H1 (cell line): ENCODE measurements at regions of chr12 and their contacts with region 1.

Region 1: GRCh38 chr12:4857472-4858291 is 52.0 kb upstream of the KCNA1 start:
- DNase-seq: peak; percentile 50 to 92
- H3K4me3 ChIP-seq: peak overlapping the region in 2 of 4 experiments; percentile 34 to 45; a peak in 5 of 8 replicates
- H3K27ac ChIP-seq: no peak overlapping the region
- H3K4me1 ChIP-seq: peaks cover 2 to 14% (median 6%) of the 10 kb centered on the region in 4 experiments; a peak in 6 of 7 replicates
- H3K27me3 ChIP-seq: peaks cover 0 to 13% (median 6%) of the 10 kb centered on the region in 4 experiments; a peak in 4 of 7 replicates
- CTCF ChIP-seq: peak; percentile 76 to 94 (median 91)
- EP300 ChIP-seq: 0 out of 3 replicates have a peak, but pooled peaks of 1 of the 2 experiments have one; percentile 17
- POLR2A ChIP-seq: no peak
- RAD21 ChIP-seq: peak; percentile 79 to 80

Region 2: GRCh38 chr12:4663971-4664505 is 193.6 kb before region 1 on chr12:
- CTCF ChIA-PET with region 1: no interaction called
- POLR2A ChIA-PET with region 1: no interaction called
- DNase-seq: no peak
- H3K4me3 ChIP-seq: no peak overlapping the region
- H3K27ac ChIP-seq: no peak overlapping the region
- H3K4me1 ChIP-seq: no peaks in the 10 kb centered on the region
- H3K27me3 ChIP-seq: no peaks in the 10 kb centered on the region
- CTCF ChIP-seq: no peak
- EP300 ChIP-seq: no peak
- POLR2A ChIP-seq: no peak
- RAD21 ChIP-seq: no peak

Region 3: DNA sequence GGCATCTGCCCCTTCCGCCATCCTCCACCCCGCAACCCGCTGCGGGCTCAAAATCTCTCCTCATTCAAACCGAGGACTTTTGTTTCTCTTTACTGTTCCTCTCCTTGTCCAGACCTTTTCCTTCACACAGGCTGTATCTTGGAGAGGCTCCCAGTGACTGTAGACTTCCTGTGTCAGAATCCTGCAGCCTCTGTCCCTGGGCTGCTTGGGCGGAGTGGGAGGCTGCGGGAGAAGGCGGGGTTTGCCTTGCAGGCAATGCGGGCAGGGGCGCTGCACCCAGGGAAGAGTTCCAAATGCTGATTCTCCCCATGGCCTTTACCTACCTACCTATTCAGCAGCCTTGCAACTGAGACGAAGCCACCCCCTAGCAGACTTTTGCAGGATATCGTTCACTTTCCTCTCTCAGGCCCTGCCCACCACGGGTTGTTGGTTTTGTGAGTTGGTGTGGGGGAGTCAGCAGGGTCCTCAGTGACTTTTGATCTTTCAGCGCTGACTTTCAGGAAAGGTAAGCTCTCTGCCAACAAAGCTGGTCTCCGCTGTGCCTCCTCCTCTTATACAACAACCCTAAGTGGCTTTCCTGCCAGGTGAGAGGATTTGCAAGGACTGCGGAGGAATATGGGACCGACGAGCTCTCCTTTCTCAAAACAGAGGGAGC is 27.0 kb before region 1 on chr12:
- CTCF ChIA-PET with region 1: interaction called, 13 read pairs
- POLR2A ChIA-PET with region 1: no interaction called
- DNase-seq: no peak
- H3K4me3 ChIP-seq: no peak overlapping the region
- H3K27ac ChIP-seq: no peak overlapping the region
- H3K4me1 ChIP-seq: peaks cover 0 to 5% (median 1%) of the 10 kb centered on the region in 4 experiments; a peak in 3 of 7 replicates
- H3K27me3 ChIP-seq: no peaks in the 10 kb centered on the region; a peak in 1 of 7 replicates
- CTCF ChIP-seq: no peak
- EP300 ChIP-seq: no peak
- POLR2A ChIP-seq: no peak
- RAD21 ChIP-seq: no peak

Region 4: GRCh38 chr12:4908684-4909409 is 51.2 kb after region 1 on chr12:
- CTCF ChIA-PET with region 1: interaction called, 162 read pairs
- POLR2A ChIA-PET with region 1: no interaction called
- DNase-seq: peak; percentile 83 to 90
- H3K4me3 ChIP-seq: peak overlapping the region; percentile 45 to 70 (median 58); a peak in 7 of 8 replicates
- H3K27ac ChIP-seq: no peak overlapping the region
- H3K4me1 ChIP-seq: peaks cover 0 to 17% (median 10%) of the 10 kb centered on the region in 4 experiments; a peak in 6 of 7 replicates
- H3K27me3 ChIP-seq: peaks cover 33 to 58% (median 46%) of the 10 kb centered on the region in 4 experiments
- CTCF ChIP-seq: peak; percentile 3 to 59 (median 54); a peak in 3 of 4 replicates
- EP300 ChIP-seq: no peak
- POLR2A ChIP-seq: no peak
- RAD21 ChIP-seq: peak; percentile 16 to 26; a peak in 2 of 4 replicates

Region 5: DNA sequence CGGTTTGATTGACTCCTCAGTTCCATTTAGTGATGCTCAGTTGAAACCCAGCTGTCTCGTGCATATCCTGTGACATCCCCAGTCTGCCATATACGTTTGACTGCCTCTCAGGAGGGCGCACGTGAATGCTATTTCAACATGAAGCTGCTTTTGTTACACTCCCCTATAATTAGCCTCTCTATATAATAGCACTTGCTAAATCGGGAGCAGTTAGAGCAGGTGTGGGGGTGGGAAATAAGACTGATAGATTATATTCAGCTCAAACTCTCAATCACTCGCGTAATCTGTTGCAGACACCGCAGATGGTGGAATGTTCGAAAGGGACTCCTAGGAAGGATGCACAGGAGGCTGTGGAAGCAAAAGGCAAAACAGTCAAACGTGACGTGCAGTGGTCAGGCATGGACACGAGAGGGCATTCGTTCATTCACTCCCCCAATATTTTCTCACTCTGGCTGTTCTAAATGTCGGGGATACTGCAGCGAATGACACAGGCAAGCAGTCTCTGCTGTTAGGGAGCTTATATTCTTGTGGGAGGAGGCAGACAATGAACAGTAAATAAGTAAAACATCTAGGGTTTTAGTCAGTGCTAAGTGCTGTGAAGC is 81.8 kb after region 1 on chr12:
- CTCF ChIA-PET with region 1: interaction called, 15 read pairs
- POLR2A ChIA-PET with region 1: no interaction called
- DNase-seq: no peak
- H3K4me3 ChIP-seq: no peak overlapping the region
- H3K27ac ChIP-seq: no peak overlapping the region
- H3K4me1 ChIP-seq: no peaks in the 10 kb centered on the region
- H3K27me3 ChIP-seq: no peaks in the 10 kb centered on the region; a peak in 2 of 7 replicates
- CTCF ChIP-seq: peak in 1 of 3 experiments; percentile 10; a peak in 1 of 4 replicates
- EP300 ChIP-seq: no peak
- POLR2A ChIP-seq: no peak
- RAD21 ChIP-seq: no peak

Region 6: GRCh38 chr12:4987076-4987760 is 129.5 kb after region 1 on chr12:
- CTCF ChIA-PET with region 1: interaction called, 97 read pairs
- POLR2A ChIA-PET with region 1: no interaction called
- DNase-seq: no peak
- H3K4me3 ChIP-seq: no peak overlapping the region
- H3K27ac ChIP-seq: no peak overlapping the region
- H3K4me1 ChIP-seq: peaks cover 0 to 7% (median 6%) of the 10 kb centered on the region in 4 experiments; a peak in 6 of 7 replicates
- H3K27me3 ChIP-seq: no peaks in the 10 kb centered on the region; a peak in 2 of 7 replicates
- CTCF ChIP-seq: no peak
- EP300 ChIP-seq: no peak
- POLR2A ChIP-seq: no peak
- RAD21 ChIP-seq: no peak

Region 7: GRCh38 chr12:5013266-5013730 is 155.6 kb after region 1 on chr12:
- CTCF ChIA-PET with region 1: interaction called, 15 read pairs
- POLR2A ChIA-PET with region 1: no interaction called
- DNase-seq: no peak
- H3K4me3 ChIP-seq: no peak overlapping the region
- H3K27ac ChIP-seq: no peak overlapping the region
- H3K4me1 ChIP-seq: peaks cover 0 to 8% (median 2%) of the 10 kb centered on the region in 4 experiments; a peak in 3 of 7 replicates
- H3K27me3 ChIP-seq: peaks cover 0 to 1% (median 0%) of the 10 kb centered on the region in 4 experiments; a peak in 1 of 7 replicates
- CTCF ChIP-seq: no peak
- EP300 ChIP-seq: no peak
- POLR2A ChIP-seq: no peak
- RAD21 ChIP-seq: no peak